ENCODE measurements at regions of chr17 and their contacts with region 1.

Region 1: GRCh38 chr17:80780381-80781198 is 211.1 kb upstream of the CHMP6 start:
- DNase-seq: peak; percentile 83
- H3K4me3 Mint-ChIP-seq: peak overlapping the region; percentile 69
- H3K27ac Mint-ChIP-seq: peak overlapping the region; percentile 87
- H3K4me1 Mint-ChIP-seq: peaks cover 69% of the 10 kb centered on the region
- H3K27me3 Mint-ChIP-seq: no peaks in the 10 kb centered on the region

Region 2: GRCh38 chr17:80504686-80505413 is 275.7 kb before region 1 on chr17:
- CTCF ChIA-PET with region 1: no interaction called
- POLR2A ChIA-PET with region 1: no interaction called
- intact Hi-C with region 1: no loop called
- DNase-seq: no peak
- H3K4me3 Mint-ChIP-seq: no peak overlapping the region
- H3K27ac Mint-ChIP-seq: no peak overlapping the region
- H3K4me1 Mint-ChIP-seq: no peaks in the 10 kb centered on the region
- H3K27me3 Mint-ChIP-seq: peaks cover 8% of the 10 kb centered on the region

Region 3: GRCh38 chr17:80761110-80761871 is 19.3 kb before region 1 on chr17:
- CTCF ChIA-PET with region 1: interaction called, 3 read pairs
- POLR2A ChIA-PET with region 1: interaction called, 5 read pairs
- intact Hi-C with region 1: loop called (anchors 1 kb)
- DNase-seq: peak; percentile 86
- H3K4me3 Mint-ChIP-seq: peak overlapping the region; percentile 68
- H3K27ac Mint-ChIP-seq: peak overlapping the region; percentile 96
- H3K4me1 Mint-ChIP-seq: peaks cover 73% of the 10 kb centered on the region
- H3K27me3 Mint-ChIP-seq: no peaks in the 10 kb centered on the region

Measured in activated CD4-positive, alpha-beta memory T cell treated with anti-CD3 and anti-CD28 coated beads for 36 hours (primary cell).